Caco-2 (cell line): ENCODE measurements at regions of chr1 and their contacts with region 1.

Region 1: DNA sequence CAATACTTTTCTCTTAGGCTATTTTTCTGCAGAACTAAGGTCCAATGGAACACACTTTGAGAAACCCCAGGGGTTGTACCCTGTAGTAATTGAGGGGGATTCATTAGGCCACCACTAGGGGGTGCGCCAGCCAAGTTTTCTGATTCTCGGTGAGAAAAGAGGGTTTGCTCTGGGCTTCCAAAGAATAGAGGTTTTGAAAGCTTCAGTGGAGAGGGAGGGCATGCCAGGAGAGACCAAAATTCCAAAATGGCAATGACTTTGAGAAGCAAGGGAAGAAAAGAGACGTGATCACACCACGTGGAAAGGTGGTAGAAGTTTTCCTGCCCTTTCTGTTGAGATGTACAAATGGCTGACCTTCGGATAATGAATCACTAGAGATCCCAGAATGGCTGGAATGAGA is 323.3 kb downstream of the RPS6KC1 start:
- DNase-seq: peak; percentile 78 to 82
- H3K4me3 ChIP-seq: no peak overlapping the region
- H3K4me3 Mint-ChIP-seq: no peak overlapping the region
- H3K27ac Mint-ChIP-seq: peak overlapping the region; percentile 13
- H3K4me1 ChIP-seq: peaks cover 80% of the 10 kb centered on the region
- H3K4me1 Mint-ChIP-seq: peaks cover 61% of the 10 kb centered on the region
- H3K27me3 ChIP-seq: no peaks in the 10 kb centered on the region
- H3K27me3 Mint-ChIP-seq: no peaks in the 10 kb centered on the region
- CTCF ChIP-seq: peak; percentile 73 to 86

Region 2: GRCh38 chr1:213122514-213122929 is 251.8 kb before region 1 on chr1:
- CTCF ChIA-PET with region 1: no interaction called
- POLR2A ChIA-PET with region 1: no interaction called
- intact Hi-C with region 1: loop called (anchors 5 kb)
- DNase-seq: peak in 1 of 2 experiments; percentile 39
- H3K4me3 ChIP-seq: no peak overlapping the region
- H3K4me3 Mint-ChIP-seq: no peak overlapping the region
- H3K27ac Mint-ChIP-seq: peak overlapping the region; percentile 65
- H3K4me1 ChIP-seq: peaks cover 22% of the 10 kb centered on the region
- H3K4me1 Mint-ChIP-seq: peaks cover 27% of the 10 kb centered on the region
- H3K27me3 ChIP-seq: no peaks in the 10 kb centered on the region
- H3K27me3 Mint-ChIP-seq: no peaks in the 10 kb centered on the region
- CTCF ChIP-seq: peak in 1 of 2 experiments; percentile 36

Region 3: DNA sequence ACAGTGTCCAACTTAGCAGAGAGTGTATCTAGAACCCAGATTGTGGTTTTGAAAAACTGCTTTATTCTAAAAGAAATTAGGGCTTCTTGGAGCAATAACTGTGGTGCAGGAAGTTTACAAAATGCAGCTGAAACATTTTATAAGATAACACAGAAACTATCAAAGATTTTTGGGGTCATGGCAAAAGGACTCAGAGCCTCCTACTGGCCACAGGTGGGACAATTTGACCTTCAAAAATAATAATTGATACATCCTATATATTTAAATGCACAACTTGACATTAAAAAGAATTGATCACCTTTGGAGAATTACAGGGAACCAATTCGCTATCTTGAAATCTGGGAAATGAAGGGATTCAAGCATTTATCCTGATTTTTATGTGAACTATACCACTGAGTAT is 88.1 kb before region 1 on chr1:
- CTCF ChIA-PET with region 1: no interaction called
- POLR2A ChIA-PET with region 1: no interaction called
- intact Hi-C with region 1: loop called (anchors 5 kb)
- DNase-seq: no peak
- H3K4me3 ChIP-seq: no peak overlapping the region
- H3K4me3 Mint-ChIP-seq: no peak overlapping the region
- H3K27ac Mint-ChIP-seq: no peak overlapping the region
- H3K4me1 ChIP-seq: peaks cover 11% of the 10 kb centered on the region
- H3K4me1 Mint-ChIP-seq: peaks cover 23% of the 10 kb centered on the region
- H3K27me3 ChIP-seq: no peaks in the 10 kb centered on the region
- H3K27me3 Mint-ChIP-seq: no peaks in the 10 kb centered on the region
- CTCF ChIP-seq: peak in 1 of 2 experiments; percentile 8

Region 4: DNA sequence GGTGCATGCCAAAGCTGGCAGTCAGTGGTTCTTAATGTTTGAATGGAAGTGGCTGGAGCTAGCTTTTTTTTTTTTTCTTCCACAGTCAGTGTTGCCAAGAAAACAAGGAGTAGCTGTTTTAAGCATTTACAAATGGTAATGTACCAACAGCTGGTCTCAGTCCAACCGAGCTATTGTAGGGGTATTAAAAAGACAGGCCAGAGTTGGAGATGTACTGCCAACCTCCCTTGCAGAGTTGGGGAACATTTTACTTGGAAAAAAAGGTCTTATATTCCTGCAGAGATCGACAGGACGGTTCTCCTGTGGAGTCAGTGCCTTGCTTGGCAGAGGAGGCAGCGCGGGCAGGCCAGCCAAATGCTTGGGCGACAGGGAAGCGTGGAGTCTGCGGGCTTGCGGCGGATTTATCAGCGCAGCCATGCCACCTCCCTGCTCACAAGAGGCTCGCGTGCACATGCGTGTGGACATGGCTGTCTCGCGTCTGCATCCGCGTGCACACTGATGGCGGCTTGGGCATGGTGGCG is 14.8 kb after region 1 on chr1:
- CTCF ChIA-PET with region 1: no interaction called
- POLR2A ChIA-PET with region 1: no interaction called
- intact Hi-C with region 1: no loop called
- DNase-seq: no peak
- H3K4me3 ChIP-seq: no peak overlapping the region
- H3K4me3 Mint-ChIP-seq: no peak overlapping the region
- H3K27ac Mint-ChIP-seq: no peak overlapping the region
- H3K4me1 ChIP-seq: peaks cover 8% of the 10 kb centered on the region
- H3K4me1 Mint-ChIP-seq: peaks cover 27% of the 10 kb centered on the region
- H3K27me3 ChIP-seq: no peaks in the 10 kb centered on the region
- H3K27me3 Mint-ChIP-seq: no peaks in the 10 kb centered on the region
- CTCF ChIP-seq: no peak

Region 5: GRCh38 chr1:213443415-213443814 is 69.0 kb after region 1 on chr1:
- CTCF ChIA-PET with region 1: no interaction called
- POLR2A ChIA-PET with region 1: no interaction called
- intact Hi-C with region 1: no loop called
- DNase-seq: peak; percentile 16 to 49
- H3K4me3 ChIP-seq: no peak overlapping the region
- H3K4me3 Mint-ChIP-seq: no peak overlapping the region
- H3K27ac Mint-ChIP-seq: no peak overlapping the region
- H3K4me1 ChIP-seq: no peaks in the 10 kb centered on the region
- H3K4me1 Mint-ChIP-seq: peaks cover 5% of the 10 kb centered on the region
- H3K27me3 ChIP-seq: no peaks in the 10 kb centered on the region
- H3K27me3 Mint-ChIP-seq: no peaks in the 10 kb centered on the region
- CTCF ChIP-seq: no peak

Region 6: GRCh38 chr1:213564215-213564659 is 189.9 kb after region 1 on chr1:
- CTCF ChIA-PET with region 1: no interaction called
- POLR2A ChIA-PET with region 1: no interaction called
- intact Hi-C with region 1: loop called (anchors 1 kb)
- DNase-seq: peak in 1 of 2 experiments; percentile 54
- H3K4me3 ChIP-seq: no peak overlapping the region
- H3K4me3 Mint-ChIP-seq: no peak overlapping the region
- H3K27ac Mint-ChIP-seq: no peak overlapping the region
- H3K4me1 ChIP-seq: peaks cover 7% of the 10 kb centered on the region
- H3K4me1 Mint-ChIP-seq: peaks cover 12% of the 10 kb centered on the region
- H3K27me3 ChIP-seq: no peaks in the 10 kb centered on the region
- H3K27me3 Mint-ChIP-seq: no peaks in the 10 kb centered on the region
- CTCF ChIP-seq: peak; percentile 48 to 64

Region 7: GRCh38 chr1:213759359-213760181 is 385.2 kb after region 1 on chr1:
- CTCF ChIA-PET with region 1: no interaction called
- POLR2A ChIA-PET with region 1: no interaction called
- intact Hi-C with region 1: loop called (anchors 10 kb)
- DNase-seq: peak in 1 of 2 experiments; percentile 14
- H3K4me3 ChIP-seq: no peak overlapping the region
- H3K4me3 Mint-ChIP-seq: no peak overlapping the region
- H3K27ac Mint-ChIP-seq: no peak overlapping the region
- H3K4me1 ChIP-seq: no peaks in the 10 kb centered on the region
- H3K4me1 Mint-ChIP-seq: no peaks in the 10 kb centered on the region
- H3K27me3 ChIP-seq: no peaks in the 10 kb centered on the region; the same call in 1 of the 2 replicates
- H3K27me3 Mint-ChIP-seq: no peaks in the 10 kb centered on the region
- CTCF ChIP-seq: no peak

Region 8: DNA sequence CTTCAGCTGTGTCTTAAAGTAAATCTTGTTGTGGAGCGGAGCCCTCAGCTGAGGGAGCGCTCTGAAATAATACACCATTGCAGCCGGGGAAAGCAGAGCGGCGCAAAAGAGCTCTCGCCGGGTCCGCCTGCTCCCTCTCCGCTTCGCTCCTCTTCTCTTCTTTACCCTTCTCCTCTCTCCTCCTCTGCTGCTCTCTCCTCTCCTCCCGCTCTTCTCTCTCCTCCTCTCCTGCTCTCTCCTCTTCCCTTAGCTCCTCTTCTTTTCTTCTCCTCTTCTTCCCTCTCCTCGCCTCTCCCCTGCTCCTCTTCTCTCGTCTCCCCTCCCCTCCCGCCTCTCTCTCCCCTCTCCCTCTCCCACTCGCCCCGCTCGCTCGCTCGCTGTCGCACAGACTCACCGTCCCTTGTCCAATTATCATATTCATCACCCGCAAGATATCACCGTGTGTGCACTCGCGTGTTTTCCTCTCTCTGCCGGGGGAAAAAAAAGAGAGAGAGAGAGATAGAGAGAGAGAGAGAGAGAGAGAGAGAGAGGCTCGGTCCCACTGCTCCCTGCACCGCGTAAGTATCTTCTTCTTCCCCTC is 613.6 kb after region 1 on chr1 and contains the start of gene PROX1:
- CTCF ChIA-PET with region 1: interaction called, 3 read pairs
- POLR2A ChIA-PET with region 1: no interaction called
- intact Hi-C with region 1: loop called (anchors 5 kb)
- DNase-seq: peak in 1 of 2 experiments; percentile 87
- H3K4me3 ChIP-seq: peak within 1 kb of the TSS; percentile 63
- H3K4me3 Mint-ChIP-seq: peak within 1 kb of the TSS; percentile 99
- H3K27ac Mint-ChIP-seq: peak within 1 kb of the TSS; percentile 89
- H3K4me1 ChIP-seq: peaks cover 25% of the 10 kb centered on the region
- H3K4me1 Mint-ChIP-seq: peaks cover 21% of the 10 kb centered on the region
- H3K27me3 ChIP-seq: no peaks in the 10 kb centered on the region; the same call in 1 of the 2 replicates
- H3K27me3 Mint-ChIP-seq: peaks cover 8% of the 10 kb centered on the region
- CTCF ChIP-seq: peak in 1 of 2 experiments; percentile 32
- total RNA-seq, gene PROX1: 17.6 and 24.5 TPM in 2 replicates

Region 9: GRCh38 chr1:214187121-214187900 is 812.9 kb after region 1 on chr1:
- CTCF ChIA-PET with region 1: no interaction called
- POLR2A ChIA-PET with region 1: no interaction called
- intact Hi-C with region 1: loop called (anchors 10 kb)
- DNase-seq: peak in 1 of 2 experiments; percentile 31
- H3K4me3 ChIP-seq: peak overlapping the region; percentile 49
- H3K4me3 Mint-ChIP-seq: peak overlapping the region; percentile 70
- H3K27ac Mint-ChIP-seq: no peak overlapping the region
- H3K4me1 ChIP-seq: peaks cover 19% of the 10 kb centered on the region
- H3K4me1 Mint-ChIP-seq: peaks cover 20% of the 10 kb centered on the region
- H3K27me3 ChIP-seq: no peaks in the 10 kb centered on the region; the same call in 1 of the 2 replicates
- H3K27me3 Mint-ChIP-seq: no peaks in the 10 kb centered on the region
- CTCF ChIP-seq: no peak